Activated CD8-positive, alpha-beta memory T cell treated with anti-CD3 and anti-CD28 coated beads, Interleukin-2, amount 10 ng/mL, durations not matched to agents 7 days and 5 days (primary cell): ENCODE measurements at regions of chr11 and their contacts with region 1.

Region 1: DNA sequence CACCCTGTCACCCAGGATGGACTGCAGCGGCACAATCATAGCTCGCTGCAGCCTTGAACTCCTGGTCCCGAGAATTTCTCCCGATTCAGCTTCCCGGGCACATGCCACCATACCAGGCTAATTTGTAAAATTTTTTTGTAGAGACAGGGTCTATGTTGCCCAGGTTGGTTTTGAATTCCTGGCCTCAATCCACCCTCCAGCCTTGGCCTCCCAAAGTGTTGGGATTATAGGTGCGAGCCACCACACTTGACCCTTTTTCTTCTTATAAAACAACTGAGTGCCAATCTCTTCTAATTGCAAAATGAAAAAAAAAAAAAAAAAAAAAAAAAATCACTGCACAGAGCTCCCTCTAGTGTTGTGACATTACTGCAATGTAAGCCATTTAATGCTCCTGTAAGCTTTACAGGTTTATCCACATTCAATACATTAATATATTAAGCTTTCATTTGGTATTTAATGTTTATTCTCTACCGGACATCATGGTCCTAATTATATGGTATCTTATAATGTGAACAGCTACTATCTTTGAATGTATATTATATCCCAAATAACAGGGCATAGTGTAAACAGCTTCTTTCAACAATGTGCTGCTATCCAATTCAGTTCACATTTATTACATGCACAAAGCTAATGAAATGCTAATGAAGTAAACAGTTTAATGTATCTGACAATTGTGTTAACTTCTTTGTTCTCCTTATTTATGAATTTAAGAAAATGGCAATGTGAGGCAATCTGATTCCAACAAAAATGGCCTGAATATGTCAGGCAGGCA is 44.6 kb downstream of the COPB1 start:
- DNase-seq: no peak
- ATAC-seq: peak; percentile 20
- H3K4me3 Mint-ChIP-seq: no peak overlapping the region
- H3K27ac Mint-ChIP-seq: no peak overlapping the region
- H3K4me1 Mint-ChIP-seq: peaks cover 5% of the 10 kb centered on the region
- H3K27me3 Mint-ChIP-seq: no peaks in the 10 kb centered on the region

Region 2: GRCh38 chr11:14300661-14301304 is 154.3 kb before region 1 on chr11:
- CTCF ChIA-PET with region 1: interaction called, 77 read pairs
- DNase-seq: peak; percentile 70
- ATAC-seq: peak; percentile 88
- H3K4me3 Mint-ChIP-seq: no peak overlapping the region
- H3K27ac Mint-ChIP-seq: no peak overlapping the region
- H3K4me1 Mint-ChIP-seq: peaks cover 21% of the 10 kb centered on the region
- H3K27me3 Mint-ChIP-seq: no peaks in the 10 kb centered on the region

Region 3: DNA sequence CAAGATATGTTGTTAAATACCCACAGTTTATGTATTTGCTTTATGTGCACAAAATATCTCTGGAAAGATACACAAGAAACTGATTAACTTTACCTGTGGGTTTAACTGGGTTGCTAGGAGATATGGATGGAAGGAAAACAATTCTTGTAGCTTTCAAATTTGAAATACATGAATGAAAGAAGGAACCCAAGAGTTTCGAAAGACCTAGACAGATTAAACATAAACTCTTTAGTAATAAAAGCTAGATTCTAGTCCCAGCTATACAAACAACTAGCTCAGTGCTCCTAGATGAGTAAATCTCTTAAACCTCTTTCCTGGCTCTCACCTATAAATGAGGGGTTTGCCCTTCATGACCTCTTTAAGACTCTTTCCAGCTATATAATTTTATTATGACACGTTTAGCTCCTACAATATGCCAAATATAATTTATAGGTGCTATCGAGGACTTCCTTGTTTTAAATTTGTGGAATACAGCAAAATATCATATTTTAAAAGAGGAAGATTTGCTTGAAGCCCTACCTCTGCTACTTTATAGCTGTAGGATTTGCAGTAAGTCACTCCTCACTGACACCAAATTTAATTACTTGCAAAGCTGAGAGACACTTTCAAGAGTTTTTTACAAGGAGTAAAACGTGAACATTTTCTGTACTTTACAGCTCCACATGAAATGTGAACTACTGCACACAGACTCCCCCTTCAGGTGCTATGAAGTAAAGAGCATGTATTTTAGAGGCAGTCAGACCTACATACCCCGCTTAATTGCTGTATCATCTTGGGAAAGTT is 146.7 kb before region 1 on chr11:
- CTCF ChIA-PET with region 1: interaction called, 77 read pairs
- DNase-seq: no peak
- ATAC-seq: peak; percentile 76
- H3K4me3 Mint-ChIP-seq: no peak overlapping the region
- H3K27ac Mint-ChIP-seq: no peak overlapping the region
- H3K4me1 Mint-ChIP-seq: peaks cover 25% of the 10 kb centered on the region
- H3K27me3 Mint-ChIP-seq: no peaks in the 10 kb centered on the region

Region 4: DNA sequence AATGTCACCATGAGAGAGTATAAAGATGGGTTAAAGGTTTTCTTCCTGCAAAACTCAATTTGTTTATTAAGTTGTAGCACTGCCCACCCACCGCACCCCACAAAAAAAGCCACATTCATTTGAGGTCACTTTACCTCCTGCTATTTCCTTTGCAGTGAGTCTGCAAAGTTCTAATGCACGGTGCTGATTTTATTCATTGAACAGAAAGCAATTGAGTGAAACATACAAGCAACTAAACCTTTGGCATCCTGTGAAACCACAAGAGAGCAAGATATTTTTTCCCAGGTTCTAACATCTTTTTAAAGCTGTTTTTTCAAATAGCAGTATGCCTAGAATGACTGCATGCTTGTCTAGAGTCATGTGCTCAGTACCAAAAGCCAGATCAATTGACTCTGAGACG is 135.0 kb before region 1 on chr11:
- CTCF ChIA-PET with region 1: interaction called, 10 read pairs
- DNase-seq: peak; percentile 92
- ATAC-seq: peak; percentile 90
- H3K4me3 Mint-ChIP-seq: peak overlapping the region; percentile 41
- H3K27ac Mint-ChIP-seq: peak overlapping the region; percentile 83
- H3K4me1 Mint-ChIP-seq: peaks cover 69% of the 10 kb centered on the region
- H3K27me3 Mint-ChIP-seq: no peaks in the 10 kb centered on the region

Region 5: DNA sequence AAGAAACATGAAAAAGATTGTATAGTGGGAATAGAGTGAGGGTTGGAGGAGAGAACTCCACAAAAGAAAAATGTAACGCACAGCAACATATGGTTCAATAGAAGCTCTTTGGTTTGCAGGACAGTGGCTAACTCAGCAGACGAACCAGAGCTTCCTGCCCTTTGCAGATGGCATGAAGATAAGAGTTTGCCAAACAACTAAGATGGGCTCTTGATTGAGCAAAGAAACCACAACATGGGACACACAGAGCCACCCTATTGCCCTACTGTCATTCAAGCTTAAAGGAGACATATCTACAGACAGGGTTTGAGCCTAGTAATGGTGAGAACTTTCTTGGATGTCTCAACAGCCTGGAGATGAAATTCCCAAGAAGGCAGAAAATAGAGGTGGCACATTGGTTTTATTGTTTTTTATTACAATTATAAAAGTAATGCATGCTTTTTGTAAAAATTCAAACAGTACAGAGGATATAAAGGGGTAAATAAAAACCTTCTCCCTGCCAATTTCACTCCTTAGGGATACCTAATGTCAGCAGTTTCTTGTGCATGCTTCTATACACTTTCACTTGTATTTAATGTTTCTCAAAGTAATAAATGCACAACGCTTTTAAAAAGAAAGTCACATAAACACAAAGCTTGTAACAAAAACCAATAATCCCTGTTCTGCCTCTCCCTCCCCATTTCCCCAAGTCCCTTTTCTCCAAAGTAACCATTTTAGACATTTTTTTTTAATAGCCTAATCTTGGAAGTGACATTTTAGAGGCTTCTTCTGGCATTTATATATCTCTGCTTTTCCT is 19.1 kb before region 1 on chr11:
- CTCF ChIA-PET with region 1: interaction called, 12 read pairs
- DNase-seq: peak; percentile 59
- ATAC-seq: peak; percentile 76
- H3K4me3 Mint-ChIP-seq: no peak overlapping the region
- H3K27ac Mint-ChIP-seq: peak overlapping the region; percentile 13
- H3K4me1 Mint-ChIP-seq: peaks cover 33% of the 10 kb centered on the region
- H3K27me3 Mint-ChIP-seq: no peaks in the 10 kb centered on the region

Region 6: DNA sequence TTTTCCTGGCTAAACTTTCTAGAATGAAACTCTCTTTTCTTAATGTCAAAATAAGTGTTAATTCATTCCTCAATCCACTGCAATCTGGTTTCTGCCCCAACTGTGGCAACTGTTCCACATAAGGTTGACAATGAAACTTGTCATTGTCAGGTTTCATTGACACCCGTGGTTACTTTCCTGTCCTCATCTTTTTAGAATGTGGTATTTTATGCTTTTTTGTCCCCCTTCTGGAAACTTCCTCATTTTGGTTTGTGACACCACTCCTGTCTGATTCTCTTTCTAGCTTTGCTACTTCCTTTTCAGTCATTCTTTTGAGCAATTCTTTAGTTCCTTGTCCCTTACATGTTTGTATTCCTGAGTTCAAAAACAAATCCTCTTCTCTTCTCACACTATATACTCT is 181.1 kb after region 1 on chr11:
- CTCF ChIA-PET with region 1: no interaction called
- DNase-seq: no peak
- ATAC-seq: no peak
- H3K4me3 Mint-ChIP-seq: no peak overlapping the region
- H3K27ac Mint-ChIP-seq: peak overlapping the region; percentile 59
- H3K4me1 Mint-ChIP-seq: peaks cover 61% of the 10 kb centered on the region
- H3K27me3 Mint-ChIP-seq: no peaks in the 10 kb centered on the region